ENCODE measurements at regions of chr5 and their contacts with region 1.

Region 1: DNA sequence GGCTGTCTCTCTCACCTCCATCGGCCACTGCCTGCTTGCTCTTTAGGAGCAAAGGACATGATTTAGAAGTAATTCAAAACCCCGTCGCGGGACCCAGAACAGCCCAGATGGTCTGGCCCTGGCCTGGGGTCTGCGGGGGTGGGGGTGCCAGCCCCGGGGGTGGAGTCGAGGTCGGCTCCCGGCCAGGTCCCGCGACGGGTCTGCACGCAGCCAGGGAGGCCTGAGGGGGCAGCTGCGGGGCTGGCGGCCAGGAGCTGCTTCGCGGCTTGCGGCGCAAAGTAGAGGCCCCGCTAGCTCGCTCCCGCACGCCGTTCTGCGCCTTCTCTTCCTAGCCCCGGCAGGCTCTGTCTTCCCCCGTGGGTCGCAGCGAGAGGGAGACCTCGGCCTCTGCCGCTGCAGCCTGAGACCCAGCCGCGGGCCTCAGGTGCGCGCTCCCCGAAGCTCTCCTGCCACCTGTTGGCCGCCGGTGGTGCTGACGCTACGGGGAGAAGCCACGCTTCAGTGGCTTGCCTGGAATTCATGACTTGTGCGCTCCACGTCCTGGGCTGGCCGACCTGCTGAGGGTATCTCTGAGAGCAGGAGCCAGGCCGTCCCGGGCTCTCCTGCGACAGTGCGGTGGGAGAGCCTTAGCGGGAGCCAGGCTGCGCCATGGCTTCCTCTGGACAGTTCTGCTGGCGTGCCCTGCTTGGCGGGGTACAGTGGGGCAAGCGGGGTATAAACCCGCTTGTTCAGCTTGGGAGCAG is 157.2 kb upstream of the PITX1 start:
- DNase-seq: peak; percentile 83
- H3K27ac ChIP-seq: peak overlapping the region; percentile 92
- CTCF ChIP-seq: peak; percentile 99

Region 2: DNA sequence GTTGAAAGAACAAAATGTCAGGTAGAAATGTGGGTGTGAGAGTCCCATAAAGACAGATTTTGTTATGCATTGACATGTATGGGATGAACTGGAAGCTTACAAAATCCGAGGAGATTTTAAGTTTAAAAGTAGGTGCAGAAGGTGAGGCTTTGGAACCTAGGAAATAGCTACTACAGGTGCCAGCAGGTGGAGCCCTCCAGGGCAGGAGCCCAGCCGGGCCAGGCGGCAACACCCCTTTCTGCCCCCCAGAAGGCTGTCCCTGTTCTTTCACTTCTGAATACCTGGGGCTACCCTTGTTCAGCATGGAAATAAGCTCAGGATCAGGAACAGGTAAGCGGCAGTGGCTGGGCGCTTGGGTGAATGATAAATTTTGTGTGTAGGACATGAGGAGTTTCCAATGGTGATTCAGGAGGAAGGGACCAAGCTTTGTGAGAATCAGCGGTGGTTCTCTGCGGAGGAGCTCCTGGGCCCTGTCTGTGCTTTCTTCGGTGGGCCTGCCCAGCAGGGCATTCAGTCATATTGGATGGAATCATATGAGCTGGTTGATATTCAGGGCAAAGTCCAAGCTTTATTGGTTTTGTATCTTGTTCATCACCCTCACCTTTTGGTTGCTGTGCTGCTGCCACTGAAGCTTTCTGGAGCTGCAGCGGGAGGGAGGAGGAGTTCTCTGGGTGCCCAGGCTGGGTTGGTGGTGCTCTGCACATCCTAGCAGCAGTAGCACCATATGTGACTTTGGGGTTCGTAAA is 274.0 kb before region 1 on chr5:
- CTCF ChIA-PET with region 1: interaction called, 13 read pairs
- POLR2A ChIA-PET with region 1: no interaction called
- DNase-seq: peak; percentile 31
- H3K27ac ChIP-seq: no peak overlapping the region
- CTCF ChIP-seq: peak; percentile 64

Region 3: DNA sequence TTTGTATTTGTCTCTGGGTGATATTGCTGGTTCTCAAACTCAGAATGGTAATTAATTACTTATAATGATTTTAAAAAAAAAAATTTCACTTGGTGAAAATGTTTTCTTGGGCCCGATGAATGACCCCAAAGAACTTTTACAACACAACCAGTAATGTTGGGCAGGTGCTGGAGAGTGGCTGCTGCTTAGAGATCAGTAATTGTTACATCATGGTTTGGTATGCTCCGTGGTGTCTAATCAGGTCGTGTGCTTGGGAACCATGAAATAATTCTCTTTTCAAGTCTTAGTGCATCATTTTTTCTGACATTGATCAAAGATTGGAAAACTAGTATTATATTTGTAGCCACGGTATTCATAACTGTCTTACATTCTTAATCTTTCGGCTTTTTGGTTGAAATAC is 257.1 kb before region 1 on chr5:
- CTCF ChIA-PET with region 1: interaction called, 10 read pairs
- POLR2A ChIA-PET with region 1: no interaction called
- DNase-seq: no peak
- H3K27ac ChIP-seq: no peak overlapping the region
- CTCF ChIP-seq: no peak

Region 4: DNA sequence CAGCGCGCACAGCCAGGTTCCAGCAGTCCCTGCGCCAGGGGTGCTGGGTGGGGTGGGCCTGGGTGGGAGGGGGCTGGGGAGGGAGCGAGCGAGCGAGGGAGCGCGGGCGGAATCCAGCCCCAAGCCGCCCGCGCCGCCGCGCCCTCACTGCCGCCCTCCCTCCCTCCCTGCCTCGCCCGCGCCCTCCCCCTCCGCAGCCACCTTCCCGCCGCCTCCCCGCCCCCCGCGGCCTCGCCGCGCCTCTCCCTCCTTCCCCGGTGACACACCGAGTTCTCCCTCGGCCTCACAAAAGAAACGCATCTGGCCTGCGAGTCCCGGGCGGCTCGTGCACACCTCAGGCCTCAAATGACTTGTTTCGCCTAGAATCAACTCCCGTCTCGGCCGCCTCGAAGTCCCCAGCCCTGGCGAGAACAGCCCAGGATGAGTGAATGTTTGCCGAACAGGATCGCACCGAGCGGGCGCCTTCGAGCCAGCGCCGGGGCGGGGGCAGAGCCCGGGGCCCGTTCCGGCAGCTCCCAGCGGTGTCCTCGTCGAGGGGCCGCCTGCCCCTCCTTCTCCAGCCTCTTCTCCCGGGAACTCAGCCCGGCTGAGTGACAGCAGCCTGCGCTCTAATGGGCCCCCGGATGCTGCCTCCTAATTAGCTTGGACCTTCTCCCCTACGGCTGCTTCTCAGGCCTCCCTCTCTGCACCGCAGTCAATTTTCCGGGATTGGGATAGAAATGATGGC is 156.9 kb before region 1 on chr5:
- CTCF ChIA-PET with region 1: interaction called, 32 read pairs
- POLR2A ChIA-PET with region 1: no interaction called
- DNase-seq: peak; percentile 89
- H3K27ac ChIP-seq: peak overlapping the region; percentile 99
- CTCF ChIP-seq: no peak